Spleen (tissue), 13 donors: ENCODE measurements at regions of chr10 and their contacts with region 1.

Region 1: GRCh38 chr10:71771821-71772617 is 1.3 kb downstream of the VSIR start:
- DNase-seq: no peak
- H3K4me3 ChIP-seq: peak overlapping the region; percentile 45 to 82 (median 76)
- H3K27ac ChIP-seq: peak overlapping the region; percentile 80 to 98 (median 95)
- H3K4me1 ChIP-seq: peaks cover 81 to 100% (median 97%) of the 10 kb centered on the region in 6 donors
- H3K27me3 ChIP-seq: no peaks in the 10 kb centered on the region
- CTCF ChIP-seq: no peak
- POLR2A ChIP-seq: no peak

Region 2: DNA sequence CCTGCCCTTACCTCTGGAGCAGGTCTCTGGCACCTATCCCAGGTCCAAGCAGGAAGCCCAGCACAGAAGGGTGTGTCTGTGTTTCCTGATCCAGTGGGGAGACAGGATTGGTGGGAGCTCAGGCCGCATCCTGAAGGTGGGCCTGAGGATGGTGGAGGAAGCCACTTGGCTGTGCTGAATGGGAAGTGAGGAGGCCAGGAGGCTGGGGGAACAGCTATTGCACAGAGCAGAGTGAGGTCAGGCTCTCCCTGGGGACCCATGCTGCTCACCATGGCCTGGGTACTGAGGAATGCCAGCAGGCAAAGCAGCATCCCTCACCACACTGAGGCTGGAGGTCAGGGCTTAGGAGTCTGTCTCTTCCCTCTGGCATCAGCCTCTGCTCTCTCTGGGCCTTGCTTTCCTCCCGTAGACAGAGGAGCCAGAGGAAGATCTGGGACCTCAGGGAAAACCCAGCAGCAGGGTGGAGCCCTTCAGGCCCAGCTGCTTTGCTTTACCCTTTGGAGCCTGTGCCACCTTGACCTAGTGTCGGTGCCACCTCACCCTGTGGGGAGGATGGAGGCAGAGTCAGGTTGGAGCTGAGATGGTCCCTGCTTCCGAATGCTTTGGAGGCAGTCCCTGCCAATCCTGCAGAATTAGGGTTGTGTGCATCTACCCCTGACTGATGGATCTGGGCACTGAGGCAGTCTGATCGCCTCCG is 336.3 kb before region 1 on chr10:
- intact Hi-C with region 1: no loop called
- DNase-seq: peak; percentile 54
- H3K4me3 ChIP-seq: no peak overlapping the region
- H3K27ac ChIP-seq: no peak overlapping the region
- H3K4me1 ChIP-seq: peaks cover 0 to 6% (median 3%) of the 10 kb centered on the region in 6 donors
- H3K27me3 ChIP-seq: peaks cover 0 to 5% (median 0%) of the 10 kb centered on the region in 7 donors
- CTCF ChIP-seq: no peak
- POLR2A ChIP-seq: no peak

Region 3: GRCh38 chr10:71727738-71728737 is 44.0 kb before region 1 on chr10:
- intact Hi-C with region 1: loop called (anchors 2 kb)
- DNase-seq: peak; percentile 93
- H3K4me3 ChIP-seq: peak overlapping the region in 2 of 8 donors; percentile 2 to 57
- H3K27ac ChIP-seq: peak overlapping the region; percentile 75 to 98 (median 94)
- H3K4me1 ChIP-seq: peaks cover 43 to 96% (median 78%) of the 10 kb centered on the region in 6 donors
- H3K27me3 ChIP-seq: no peaks in the 10 kb centered on the region
- CTCF ChIP-seq: no peak
- POLR2A ChIP-seq: no peak

Region 4: GRCh38 chr10:71921324-71922027 is 149.5 kb after region 1 on chr10:
- intact Hi-C with region 1: no loop called
- DNase-seq: no peak
- H3K4me3 ChIP-seq: no peak overlapping the region
- H3K27ac ChIP-seq: no peak overlapping the region
- H3K4me1 ChIP-seq: no peaks in the 10 kb centered on the region
- H3K27me3 ChIP-seq: no peaks in the 10 kb centered on the region
- CTCF ChIP-seq: no peak
- POLR2A ChIP-seq: no peak